Common myeloid progenitor, CD34-positive (primary cell): ENCODE measurements at regions of chr1 and their contacts with region 1.

Region 1: GRCh38 chr1:58528518-58528917 is 18.0 kb downstream of the OMA1 start:
- DNase-seq: no peak
- H3K4me3 ChIP-seq: no peak overlapping the region
- H3K27ac ChIP-seq: no peak overlapping the region
- H3K4me1 ChIP-seq: no peaks in the 10 kb centered on the region
- H3K27me3 ChIP-seq: no peaks in the 10 kb centered on the region

Region 2: GRCh38 chr1:58143972-58144697 is 384.4 kb before region 1 on chr1:
- CTCF ChIA-PET with region 1: no interaction called
- POLR2A ChIA-PET with region 1: no interaction called
- DNase-seq: no peak
- H3K4me3 ChIP-seq: no peak overlapping the region
- H3K27ac ChIP-seq: no peak overlapping the region
- H3K4me1 ChIP-seq: peaks cover 0 to 10% (median 3%) of the 10 kb centered on the region in 4 experiments
- H3K27me3 ChIP-seq: no peaks in the 10 kb centered on the region

Region 3: GRCh38 chr1:58546520-58547308 is 18.2 kb after region 1 on chr1 and contains the start of gene OMA1:
- CTCF ChIA-PET with region 1: interaction called, 11 read pairs
- POLR2A ChIA-PET with region 1: interaction called, 3 read pairs
- DNase-seq: peak; percentile 97 to 99 (median 99)
- H3K4me3 ChIP-seq: peak within 1 kb of the TSS; percentile 68 to 90 (median 81)
- H3K27ac ChIP-seq: peak within 1 kb of the TSS; percentile 85 to 94
- H3K4me1 ChIP-seq: peaks cover 3 to 19% (median 11%) of the 10 kb centered on the region in 4 experiments
- H3K27me3 ChIP-seq: no peaks in the 10 kb centered on the region

Region 4: DNA sequence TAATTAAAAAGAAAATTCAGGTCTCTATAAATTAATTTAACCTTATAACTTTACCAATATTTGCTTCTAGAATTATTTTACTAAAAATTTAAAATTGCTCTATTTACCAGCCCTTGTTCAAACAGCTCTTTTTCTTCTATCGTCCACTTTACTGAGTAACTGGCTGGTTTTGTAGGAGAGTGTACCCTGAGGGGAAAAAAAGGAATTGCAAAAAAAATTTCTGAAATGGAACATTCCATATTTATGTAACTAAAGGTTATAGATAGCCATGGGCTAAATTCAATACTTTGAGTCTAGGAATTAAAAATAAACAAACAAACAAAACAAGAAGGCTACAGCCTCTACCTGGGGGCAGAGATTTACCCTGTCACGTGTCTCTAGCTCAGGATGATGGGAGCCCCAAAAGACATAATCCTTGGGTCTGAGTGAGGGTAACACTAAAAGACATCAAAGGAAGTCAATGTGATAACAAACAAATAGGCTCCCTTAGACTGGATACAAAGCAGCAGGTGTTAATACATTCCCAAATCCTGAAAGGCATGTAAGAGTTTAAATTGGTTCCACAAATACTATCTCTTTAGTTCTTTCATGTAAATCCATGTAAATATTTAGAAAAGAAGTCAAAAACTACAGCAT is 160.5 kb after region 1 on chr1:
- CTCF ChIA-PET with region 1: no interaction called
- POLR2A ChIA-PET with region 1: no interaction called
- DNase-seq: no peak
- H3K4me3 ChIP-seq: no peak overlapping the region
- H3K27ac ChIP-seq: no peak overlapping the region
- H3K4me1 ChIP-seq: no peaks in the 10 kb centered on the region
- H3K27me3 ChIP-seq: no peaks in the 10 kb centered on the region